Dendritic cell treated with granulocyte-macrophage colony-stimulating factor and Interleukin-4, amounts not matched to agents 40 ng/mL and 50 ng/mL, for 4 days (primary cell): ENCODE measurements at regions of chr19 and their contacts with region 1.

Region 1: DNA sequence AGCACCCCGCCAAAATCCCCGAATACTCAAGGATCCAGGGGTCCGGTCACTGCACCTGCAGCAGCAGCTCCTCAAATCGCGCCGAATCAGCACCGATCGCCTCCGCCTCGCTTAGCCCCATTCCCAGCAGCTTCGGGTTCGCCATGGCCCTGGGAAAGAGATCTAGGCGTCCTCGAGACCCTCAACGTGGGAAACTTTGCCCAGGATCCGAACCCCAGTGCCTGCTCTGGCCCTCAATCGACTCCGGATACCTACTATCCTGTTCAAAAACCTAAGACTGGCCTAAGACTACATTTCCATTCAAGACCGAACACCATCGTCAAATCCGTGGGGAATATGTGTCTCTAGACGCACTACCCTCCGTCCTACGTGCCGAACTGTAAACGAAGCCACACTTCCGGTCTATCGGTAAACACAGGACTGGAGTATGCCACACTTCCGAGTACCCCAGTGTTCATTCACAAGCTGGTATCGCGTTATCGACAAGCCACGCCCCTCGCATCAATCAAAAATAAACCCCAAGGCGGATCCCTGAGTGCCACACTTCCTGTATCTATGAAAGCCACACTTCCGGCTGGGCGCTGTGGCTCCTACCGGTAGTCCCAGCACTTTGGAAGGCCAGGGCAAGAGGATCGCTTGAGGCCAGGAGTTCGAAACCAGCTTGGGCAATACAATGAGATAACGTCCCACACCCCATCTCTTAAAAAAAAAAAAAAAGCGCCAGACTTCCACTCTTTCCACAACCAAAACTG is at the start of gene PIH1D1:
- H3K4me3 Mint-ChIP-seq: peak within 1 kb of the TSS; percentile 99
- H3K27ac Mint-ChIP-seq: peak within 1 kb of the TSS; percentile 98
- H3K4me1 Mint-ChIP-seq: peaks cover 66% of the 10 kb centered on the region
- H3K27me3 Mint-ChIP-seq: no peaks in the 10 kb centered on the region

Region 2: GRCh38 chr19:49403404-49404187 is 48.0 kb before region 1 on chr19:
- intact Hi-C with region 1: no loop called
- H3K4me3 Mint-ChIP-seq: no peak overlapping the region
- H3K27ac Mint-ChIP-seq: no peak overlapping the region
- H3K4me1 Mint-ChIP-seq: peaks cover 20% of the 10 kb centered on the region
- H3K27me3 Mint-ChIP-seq: peaks cover 16% of the 10 kb centered on the region

Region 3: DNA sequence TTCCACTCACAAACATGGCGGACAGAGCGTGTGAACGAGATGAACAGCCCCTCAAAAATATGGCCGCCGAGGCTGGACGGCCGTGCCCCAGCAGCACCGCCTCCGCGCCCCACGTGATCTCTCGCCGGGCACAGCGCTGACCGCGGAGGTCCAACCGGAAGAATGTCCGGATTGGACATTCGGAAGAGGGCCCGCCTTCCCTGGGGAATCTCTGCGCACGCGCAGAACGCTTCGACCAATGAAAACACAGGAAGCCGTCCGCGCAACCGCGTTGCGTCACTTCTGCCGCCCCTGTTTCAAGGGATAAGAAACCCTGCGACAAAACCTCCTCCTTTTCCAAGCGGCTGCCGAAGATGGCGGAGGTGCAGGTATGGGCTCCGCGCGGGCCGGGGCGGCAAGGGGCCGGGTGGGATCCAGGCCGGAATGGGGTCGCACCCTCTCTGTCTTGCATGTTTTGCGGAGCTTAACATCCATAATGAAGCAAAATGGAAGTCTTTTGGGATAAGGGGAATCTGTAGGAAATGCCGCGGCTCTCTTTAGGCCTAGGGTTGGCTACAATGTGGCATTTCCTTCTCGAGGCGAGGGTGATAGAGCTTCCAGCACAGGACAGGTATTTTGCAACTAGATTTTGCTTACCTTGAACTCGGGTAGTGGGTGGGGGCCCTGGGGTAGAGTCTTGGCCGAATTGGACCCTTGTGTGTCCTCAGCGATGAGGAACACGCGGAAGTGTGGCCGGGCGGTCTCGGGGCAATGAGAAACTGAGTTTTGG is 35.9 kb after region 1 on chr19 and contains the start of gene RPL13A:
- intact Hi-C with region 1: loop called (anchors 1 kb)
- H3K4me3 Mint-ChIP-seq: peak within 1 kb of the TSS; percentile 89
- H3K27ac Mint-ChIP-seq: peak within 1 kb of the TSS; percentile 95
- H3K4me1 Mint-ChIP-seq: peaks cover 19% of the 10 kb centered on the region
- H3K27me3 Mint-ChIP-seq: no peaks in the 10 kb centered on the region